Activated B cell treated with CpG ODN at 0.5 μM for 24 hours (primary cell): ENCODE measurements at regions of chr19 and their contacts with region 1.

Region 1: DNA sequence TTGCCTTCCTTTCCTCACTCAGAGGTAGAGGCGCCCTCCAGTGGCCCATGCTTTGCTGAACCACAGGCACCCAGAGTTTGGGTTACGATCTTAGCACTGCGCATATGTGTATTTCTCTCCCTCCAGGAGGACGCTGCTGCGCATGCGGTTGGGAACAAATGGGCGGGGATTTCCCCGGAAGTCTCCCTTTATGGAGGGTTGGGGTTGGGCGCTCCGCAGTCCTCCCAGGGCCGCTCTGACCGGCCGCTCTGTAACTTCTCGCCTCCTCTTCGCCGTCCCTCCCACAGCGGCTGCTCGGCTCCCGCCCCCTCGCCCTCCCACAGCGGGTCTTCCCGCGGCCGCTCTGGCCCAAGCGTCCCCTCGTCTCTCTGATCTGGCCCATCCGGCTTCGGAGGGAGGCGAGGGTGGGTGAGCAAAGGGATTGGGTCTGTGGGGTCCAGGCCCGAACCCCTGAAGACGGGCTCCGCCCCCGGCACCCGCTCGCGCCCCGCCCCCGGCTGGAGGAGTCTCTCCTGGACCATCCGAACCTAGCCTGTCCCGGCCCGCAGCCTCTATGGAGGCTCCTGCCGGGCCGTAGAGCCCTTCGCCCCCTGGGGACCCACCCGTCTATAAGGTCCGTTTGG is at the start of gene MEGF8:
- DNase-seq: peak; percentile 94
- ATAC-seq: peak; percentile 90
- H3K4me3 Mint-ChIP-seq: peak within 1 kb of the TSS; percentile 87
- H3K27ac Mint-ChIP-seq: peak within 1 kb of the TSS; percentile 75
- H3K4me1 Mint-ChIP-seq: peaks cover 21% of the 10 kb centered on the region
- H3K27me3 Mint-ChIP-seq: peaks cover 7% of the 10 kb centered on the region
- CTCF ChIP-seq: peak; percentile 5
- total RNA-seq, gene MEGF8: 13.0 and 15.1 TPM in 2 replicates

Region 2: GRCh38 chr19:41859618-41860418 is 465.6 kb before region 1 on chr19 and contains the start of gene RPS19:
- CTCF ChIA-PET with region 1: no interaction called
- POLR2A ChIA-PET with region 1: no interaction called
- intact Hi-C with region 1: loop called (anchors 1 kb)
- DNase-seq: peak; percentile 98
- ATAC-seq: peak; percentile 85
- H3K4me3 Mint-ChIP-seq: peak within 1 kb of the TSS; percentile 94
- H3K27ac Mint-ChIP-seq: peak within 1 kb of the TSS; percentile 97
- H3K4me1 Mint-ChIP-seq: peaks cover 44% of the 10 kb centered on the region
- H3K27me3 Mint-ChIP-seq: no peaks in the 10 kb centered on the region
- CTCF ChIP-seq: no peak
- total RNA-seq, gene RPS19: 4,196 and 4,853 TPM in 2 replicates

Region 3: GRCh38 chr19:42075616-42076379 is 249.6 kb before region 1 on chr19 and contains the start of gene ZNF574:
- CTCF ChIA-PET with region 1: no interaction called
- POLR2A ChIA-PET with region 1: interaction called, 3 read pairs
- intact Hi-C with region 1: loop called (anchors 1 kb)
- DNase-seq: peak; percentile 91
- ATAC-seq: peak; percentile 95
- H3K4me3 Mint-ChIP-seq: peak within 1 kb of the TSS; percentile 93
- H3K27ac Mint-ChIP-seq: peak within 1 kb of the TSS; percentile 99
- H3K4me1 Mint-ChIP-seq: peaks cover 37% of the 10 kb centered on the region
- H3K27me3 Mint-ChIP-seq: no peaks in the 10 kb centered on the region
- CTCF ChIP-seq: no peak
- total RNA-seq, gene ZNF574: 27.7 and 29.6 TPM in 2 replicates

Region 4: DNA sequence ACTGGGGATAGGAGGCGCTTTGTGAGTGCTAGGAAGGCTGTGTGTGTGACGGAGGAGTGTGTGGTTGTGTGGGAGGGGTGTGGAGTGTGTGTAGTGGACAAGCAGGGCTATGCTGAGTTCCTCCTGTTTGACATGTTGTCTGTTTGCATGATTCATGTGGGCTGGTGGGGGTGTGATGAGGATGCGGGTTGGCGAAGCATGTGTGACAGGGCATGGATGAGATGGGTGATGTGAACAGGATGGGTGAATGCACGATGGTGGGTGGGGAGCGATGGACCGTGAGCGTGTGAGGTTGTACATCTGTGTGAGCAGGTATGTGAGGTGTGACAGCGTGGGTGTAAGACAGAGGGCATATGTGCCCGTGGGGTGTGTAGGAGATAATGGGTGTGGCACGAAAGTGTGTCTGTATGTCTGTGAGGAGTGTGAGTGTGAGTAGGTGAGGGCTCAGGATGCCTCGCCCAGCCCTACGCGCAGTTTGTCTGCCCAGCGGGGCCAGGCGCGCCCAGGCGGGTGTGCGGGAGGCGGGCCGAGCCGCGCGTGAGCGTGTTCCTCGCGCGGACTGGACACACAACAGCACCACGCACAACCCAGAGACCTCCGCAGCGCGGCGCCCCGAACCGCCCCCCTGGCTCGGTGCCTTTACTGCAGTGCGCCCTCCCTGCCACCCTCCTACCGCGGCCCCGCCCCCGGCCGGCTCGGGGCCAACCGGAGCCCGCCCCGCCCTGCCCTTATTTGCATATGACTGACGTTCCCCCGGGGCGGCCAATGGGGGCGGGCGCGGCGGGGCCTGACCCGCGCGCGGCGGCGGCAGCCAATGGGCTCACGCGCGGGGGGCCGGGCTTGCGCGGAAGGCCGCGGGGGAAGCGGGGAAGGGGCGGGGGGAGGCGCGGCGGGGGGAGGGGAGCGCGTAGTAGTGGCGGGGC is 42.0 kb before region 1 on chr19:
- CTCF ChIA-PET with region 1: no interaction called
- POLR2A ChIA-PET with region 1: no interaction called
- intact Hi-C with region 1: loop called (anchors 1 kb)
- DNase-seq: peak; percentile 91
- ATAC-seq: peak; percentile 64
- H3K4me3 Mint-ChIP-seq: no peak overlapping the region
- H3K27ac Mint-ChIP-seq: no peak overlapping the region
- H3K4me1 Mint-ChIP-seq: peaks cover 55% of the 10 kb centered on the region
- H3K27me3 Mint-ChIP-seq: no peaks in the 10 kb centered on the region
- CTCF ChIP-seq: no peak

Region 5: DNA sequence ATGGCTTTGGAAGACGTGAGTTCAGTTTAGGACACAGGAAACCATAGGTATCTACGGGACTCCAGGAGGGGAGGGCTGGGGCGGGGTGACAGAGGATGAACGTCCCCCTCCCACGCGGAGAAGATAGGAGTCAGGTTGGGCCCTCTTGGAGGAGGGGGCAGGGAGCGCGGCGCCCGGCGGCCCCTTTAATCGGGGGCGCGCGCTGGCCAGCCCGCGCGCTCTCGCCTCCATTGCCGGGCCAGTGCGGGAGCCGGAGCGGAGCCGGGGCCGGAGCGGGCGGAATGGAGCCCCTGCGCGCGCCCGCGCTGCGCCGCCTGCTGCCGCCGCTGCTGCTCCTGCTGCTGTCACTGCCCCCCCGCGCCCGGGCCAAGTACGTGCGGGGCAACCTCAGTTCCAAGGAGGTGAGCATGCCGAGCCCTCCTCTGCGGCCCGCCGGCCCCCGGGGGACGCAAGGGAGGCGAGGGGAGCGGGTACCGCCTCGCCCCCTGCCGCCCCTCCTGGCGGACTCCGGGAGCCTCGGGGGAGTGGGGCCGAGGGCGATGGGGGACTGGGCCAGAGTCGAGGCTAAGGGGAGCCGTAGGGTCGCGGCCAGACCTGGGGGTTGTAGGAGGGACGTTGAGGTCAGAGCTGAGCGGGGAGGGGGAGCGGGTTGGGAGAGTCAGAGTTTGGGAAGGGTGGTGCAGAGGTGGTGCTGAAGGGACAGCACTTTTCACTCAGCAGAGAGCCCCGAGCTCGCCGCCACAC is 12.1 kb before region 1 on chr19 and contains the start of gene TMEM145:
- CTCF ChIA-PET with region 1: no interaction called
- POLR2A ChIA-PET with region 1: interaction called, 3 read pairs
- intact Hi-C with region 1: loop called (anchors 1 kb)
- DNase-seq: no peak
- ATAC-seq: peak; percentile 77
- H3K4me3 Mint-ChIP-seq: peak within 1 kb of the TSS; percentile 68
- H3K27ac Mint-ChIP-seq: no peak within 1 kb of the TSS
- H3K4me1 Mint-ChIP-seq: peaks cover 19% of the 10 kb centered on the region
- H3K27me3 Mint-ChIP-seq: peaks cover 28% of the 10 kb centered on the region
- CTCF ChIP-seq: no peak
- total RNA-seq, gene TMEM145: not detected in 2 replicates

Region 6: GRCh38 chr19:42356686-42357085 is 31.3 kb after region 1 on chr19:
- CTCF ChIA-PET with region 1: no interaction called
- POLR2A ChIA-PET with region 1: no interaction called
- intact Hi-C with region 1: no loop called
- DNase-seq: no peak
- ATAC-seq: no peak
- H3K4me3 Mint-ChIP-seq: no peak overlapping the region
- H3K27ac Mint-ChIP-seq: no peak overlapping the region
- H3K4me1 Mint-ChIP-seq: peaks cover 6% of the 10 kb centered on the region
- H3K27me3 Mint-ChIP-seq: no peaks in the 10 kb centered on the region
- CTCF ChIP-seq: no peak

Region 7: DNA sequence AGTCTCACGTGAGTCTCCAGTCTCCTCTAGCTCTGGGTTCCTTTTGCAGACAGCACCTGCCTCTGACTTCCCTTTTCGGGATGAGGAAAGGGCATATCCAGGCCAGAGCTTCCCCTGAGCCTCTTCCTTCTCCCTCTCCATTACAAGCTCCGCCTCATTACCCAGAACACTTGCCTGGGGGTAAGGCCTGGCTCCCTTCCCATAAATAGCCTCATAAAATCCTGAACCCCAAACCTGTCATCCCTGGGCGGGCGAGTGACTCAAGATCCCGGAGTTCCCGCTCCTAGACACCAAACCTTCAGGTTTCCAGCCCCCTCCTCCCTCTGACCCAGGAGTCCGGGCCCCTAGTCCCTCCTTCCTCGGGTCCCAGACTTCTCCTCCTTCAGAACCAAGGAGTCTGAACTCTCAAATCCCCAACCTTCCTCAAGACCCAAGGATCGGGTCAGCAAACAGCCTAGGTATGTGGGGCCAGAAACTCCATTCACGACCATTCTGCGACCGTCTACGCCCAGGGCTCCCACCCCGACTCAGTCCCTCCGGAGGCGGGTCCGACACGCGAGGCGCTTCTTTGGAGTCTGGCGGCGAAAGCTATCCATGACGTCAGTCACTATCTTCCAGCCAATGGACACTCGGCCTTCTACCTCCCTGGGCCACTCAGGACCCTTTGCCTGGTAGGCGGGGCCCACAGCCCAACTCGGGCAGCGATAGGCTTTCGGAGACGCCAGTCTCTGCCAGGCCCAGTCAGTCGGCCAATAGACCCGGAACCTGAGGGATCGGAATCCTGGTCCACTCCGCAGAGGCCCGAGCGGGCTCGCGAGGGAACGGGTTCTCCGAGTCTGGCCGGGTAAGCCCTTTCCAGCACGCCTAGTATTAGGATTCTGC is 71.2 kb after region 1 on chr19:
- CTCF ChIA-PET with region 1: interaction called, 4 read pairs
- POLR2A ChIA-PET with region 1: interaction called, 3 read pairs
- intact Hi-C with region 1: loop called (anchors 1 kb)
- DNase-seq: peak; percentile 96
- ATAC-seq: peak; percentile 96
- H3K4me3 Mint-ChIP-seq: peak overlapping the region; percentile 95
- H3K27ac Mint-ChIP-seq: peak overlapping the region; percentile 89
- H3K4me1 Mint-ChIP-seq: peaks cover 45% of the 10 kb centered on the region
- H3K27me3 Mint-ChIP-seq: peaks cover 5% of the 10 kb centered on the region
- CTCF ChIP-seq: no peak

Region 8: GRCh38 chr19:42423462-42424344 is 98.3 kb after region 1 on chr19:
- CTCF ChIA-PET with region 1: no interaction called
- POLR2A ChIA-PET with region 1: no interaction called
- intact Hi-C with region 1: loop called (anchors 1 kb)
- DNase-seq: peak; percentile 91
- ATAC-seq: peak; percentile 90
- H3K4me3 Mint-ChIP-seq: peak overlapping the region; percentile 98
- H3K27ac Mint-ChIP-seq: peak overlapping the region; percentile 98
- H3K4me1 Mint-ChIP-seq: peaks cover 46% of the 10 kb centered on the region
- H3K27me3 Mint-ChIP-seq: no peaks in the 10 kb centered on the region
- CTCF ChIP-seq: no peak